ENCODE measurements at regions of chr12 and their contacts with region 1.

Region 1: DNA sequence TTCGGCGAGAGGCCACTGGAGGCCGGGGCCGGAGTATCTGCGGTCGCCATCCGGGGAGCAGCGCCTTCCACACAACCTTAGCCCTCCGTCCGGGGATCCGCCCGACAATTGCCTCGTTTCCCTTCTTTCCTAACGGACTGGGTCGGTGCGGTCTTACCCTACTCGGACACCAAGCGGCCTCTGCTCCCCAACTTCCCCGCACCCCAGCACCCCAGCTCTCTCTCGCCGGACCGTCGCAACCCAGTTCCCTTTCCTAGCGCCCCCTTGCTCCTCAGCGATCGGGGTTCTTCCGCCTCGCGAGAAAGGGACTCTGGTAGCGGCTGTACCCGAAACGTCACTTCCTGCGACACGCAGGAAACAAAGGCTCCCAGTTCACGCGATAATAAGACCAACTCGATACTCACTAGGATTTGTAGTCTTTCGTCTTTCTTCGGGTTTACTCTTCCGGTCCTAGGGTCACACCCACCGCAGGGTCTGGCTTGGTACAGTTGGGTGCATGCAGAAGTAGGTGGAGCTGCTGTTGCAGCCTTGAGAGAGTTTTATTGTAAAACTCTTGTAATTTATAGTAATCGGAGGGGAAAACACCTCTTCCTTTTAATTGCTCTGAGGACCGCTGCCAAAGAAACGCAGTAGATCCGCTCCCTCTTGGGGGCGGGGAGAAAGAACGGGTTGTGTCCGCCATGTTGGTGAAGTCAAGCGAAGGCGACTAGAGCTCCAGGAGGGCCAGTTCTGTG is at the start of gene ZFC3H1:
- DNase-seq: peak; percentile 98
- ATAC-seq: peak; percentile 82
- H3K4me3 ChIP-seq: peak within 1 kb of the TSS; percentile 82 to 97 (median 88)
- H3K4me3 Mint-ChIP-seq: peak within 1 kb of the TSS; percentile 96
- H3K27ac ChIP-seq: peak within 1 kb of the TSS; percentile 93 to 97
- H3K27ac Mint-ChIP-seq: peak within 1 kb of the TSS; percentile 100
- H3K4me1 ChIP-seq: peaks cover 28% of the 10 kb centered on the region in 2 donors
- H3K4me1 Mint-ChIP-seq: peaks cover 57% of the 10 kb centered on the region
- H3K27me3 ChIP-seq: no peaks in the 10 kb centered on the region
- H3K27me3 Mint-ChIP-seq: no peaks in the 10 kb centered on the region
- CTCF ChIP-seq: peak; percentile 17
- total RNA-seq, gene ZFC3H1: 141 and 154 TPM in 2 replicates

Region 2: GRCh38 chr12:71576496-71576895 is 87.2 kb before region 1 on chr12:
- CTCF ChIA-PET with region 1: no interaction called
- POLR2A ChIA-PET with region 1: no interaction called
- intact Hi-C with region 1: no loop called
- DNase-seq: no peak
- ATAC-seq: no peak
- H3K4me3 ChIP-seq: no peak overlapping the region
- H3K4me3 Mint-ChIP-seq: no peak overlapping the region
- H3K27ac ChIP-seq: no peak overlapping the region
- H3K27ac Mint-ChIP-seq: no peak overlapping the region
- H3K4me1 ChIP-seq: no peaks in the 10 kb centered on the region
- H3K4me1 Mint-ChIP-seq: no peaks in the 10 kb centered on the region
- H3K27me3 ChIP-seq: no peaks in the 10 kb centered on the region
- H3K27me3 Mint-ChIP-seq: peaks cover 7% of the 10 kb centered on the region
- CTCF ChIP-seq: no peak

Region 3: GRCh38 chr12:71626098-71626497 is 37.6 kb before region 1 on chr12:
- CTCF ChIA-PET with region 1: no interaction called
- POLR2A ChIA-PET with region 1: no interaction called
- intact Hi-C with region 1: loop called (anchors 5 kb)
- DNase-seq: peak; percentile 63
- ATAC-seq: peak; percentile 14
- H3K4me3 ChIP-seq: no peak overlapping the region
- H3K4me3 Mint-ChIP-seq: no peak overlapping the region
- H3K27ac ChIP-seq: peak overlapping the region in 1 of 2 donors; percentile 43
- H3K27ac Mint-ChIP-seq: peak overlapping the region; percentile 5
- H3K4me1 ChIP-seq: peaks cover 0 to 7% of the 10 kb centered on the region in 2 donors
- H3K4me1 Mint-ChIP-seq: peaks cover 22% of the 10 kb centered on the region
- H3K27me3 ChIP-seq: no peaks in the 10 kb centered on the region
- H3K27me3 Mint-ChIP-seq: no peaks in the 10 kb centered on the region
- CTCF ChIP-seq: no peak

Region 4: GRCh38 chr12:71685914-71686665 is 22.4 kb after region 1 on chr12 and contains the start of gene TMEM19:
- CTCF ChIA-PET with region 1: interaction called, 55 read pairs
- POLR2A ChIA-PET with region 1: interaction called, 95 read pairs
- intact Hi-C with region 1: loop called (anchors 1 kb)
- DNase-seq: peak; percentile 94
- ATAC-seq: peak; percentile 91
- H3K4me3 ChIP-seq: peak within 1 kb of the TSS; percentile 70 to 99 (median 81)
- H3K4me3 Mint-ChIP-seq: peak within 1 kb of the TSS; percentile 97
- H3K27ac ChIP-seq: peak within 1 kb of the TSS; percentile 83 to 95
- H3K27ac Mint-ChIP-seq: peak within 1 kb of the TSS; percentile 96
- H3K4me1 ChIP-seq: peaks cover 53 to 54% of the 10 kb centered on the region in 2 donors
- H3K4me1 Mint-ChIP-seq: peaks cover 49% of the 10 kb centered on the region
- H3K27me3 ChIP-seq: no peaks in the 10 kb centered on the region
- H3K27me3 Mint-ChIP-seq: no peaks in the 10 kb centered on the region
- CTCF ChIP-seq: no peak
- total RNA-seq, gene TMEM19: 39.4 and 45.5 TPM in 2 replicates

Region 5: GRCh38 chr12:71754461-71755145 is 90.9 kb after region 1 on chr12 and contains the start of gene RAB21:
- CTCF ChIA-PET with region 1: interaction called, 116 read pairs
- POLR2A ChIA-PET with region 1: interaction called, 6 read pairs
- intact Hi-C with region 1: loop called (anchors 1 kb)
- DNase-seq: peak; percentile 98
- ATAC-seq: peak; percentile 91
- H3K4me3 ChIP-seq: peak within 1 kb of the TSS; percentile 76 to 89 (median 86)
- H3K4me3 Mint-ChIP-seq: peak within 1 kb of the TSS; percentile 96
- H3K27ac ChIP-seq: peak within 1 kb of the TSS; percentile 91 to 97
- H3K27ac Mint-ChIP-seq: peak within 1 kb of the TSS; percentile 98
- H3K4me1 ChIP-seq: peaks cover 17 to 23% of the 10 kb centered on the region in 2 donors
- H3K4me1 Mint-ChIP-seq: peaks cover 38% of the 10 kb centered on the region
- H3K27me3 ChIP-seq: no peaks in the 10 kb centered on the region
- H3K27me3 Mint-ChIP-seq: peaks cover 13% of the 10 kb centered on the region
- CTCF ChIP-seq: peak; percentile 35
- total RNA-seq, gene RAB21: 69.4 and 83.7 TPM in 2 replicates